ENCODE measurements at regions of chr1 and their contacts with region 1.

Region 1: DNA sequence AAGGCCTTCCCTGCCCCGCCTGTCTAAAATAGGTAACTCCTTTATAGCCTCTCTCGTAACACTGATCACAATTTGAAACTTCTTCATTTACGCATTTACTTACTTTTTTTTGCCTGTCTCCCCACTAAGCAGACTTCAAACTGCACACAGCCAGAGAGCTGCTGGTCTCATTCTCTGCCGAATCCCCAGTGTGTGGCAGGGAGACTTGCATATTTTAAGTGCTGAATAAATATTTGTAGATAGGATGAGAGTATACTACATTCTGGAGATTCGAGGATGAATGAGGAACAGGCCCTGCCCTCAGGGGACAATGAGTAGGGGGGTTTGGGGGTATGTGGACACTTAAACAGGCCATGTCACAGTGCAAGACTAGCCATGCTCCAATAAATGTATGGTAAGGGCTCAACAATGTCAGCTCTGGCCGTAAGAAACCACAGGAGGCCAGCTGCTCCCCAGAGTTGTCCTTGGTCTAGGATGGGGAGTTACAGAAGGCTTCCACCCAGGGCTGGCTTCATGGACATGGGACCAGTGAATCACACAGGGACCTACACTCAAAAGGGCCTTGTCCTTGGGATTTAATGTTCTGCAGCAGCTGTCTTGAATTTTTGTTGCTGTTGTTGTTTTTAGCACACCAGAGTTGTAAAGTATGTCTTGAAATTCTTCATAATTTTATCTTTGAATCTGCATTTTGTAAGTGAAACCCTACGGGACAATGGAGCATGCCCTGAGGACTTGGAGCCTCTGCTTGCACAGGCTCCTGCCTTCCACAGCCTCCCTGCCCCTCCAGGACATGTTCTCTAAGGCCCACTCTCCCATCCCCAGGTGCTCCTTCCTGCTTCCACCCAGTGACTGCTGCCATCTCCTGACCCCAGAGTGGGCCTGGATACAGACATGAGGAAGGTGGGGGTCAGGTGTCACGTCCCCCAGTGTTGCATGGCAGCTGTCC is 8.5 kb downstream of the DIO1 start:
- DNase-seq: no peak
- H3K4me3 Mint-ChIP-seq: no peak overlapping the region
- H3K27ac Mint-ChIP-seq: no peak overlapping the region
- H3K4me1 Mint-ChIP-seq: no peaks in the 10 kb centered on the region
- H3K27me3 Mint-ChIP-seq: no peaks in the 10 kb centered on the region
- CTCF ChIP-seq: no peak

Region 2: GRCh38 chr1:53663529-53664300 is 238.8 kb before region 1 on chr1:
- CTCF ChIA-PET with region 1: no interaction called
- POLR2A ChIA-PET with region 1: no interaction called
- intact Hi-C with region 1: loop called (anchors 5 kb)
- DNase-seq: no peak
- H3K4me3 Mint-ChIP-seq: no peak overlapping the region
- H3K27ac Mint-ChIP-seq: no peak overlapping the region
- H3K4me1 Mint-ChIP-seq: no peaks in the 10 kb centered on the region
- H3K27me3 Mint-ChIP-seq: peaks cover 18% of the 10 kb centered on the region
- CTCF ChIP-seq: no peak